ENCODE measurements at regions of chr16 and their contacts with region 1.

Region 1: GRCh38 chr16:78333808-78334207 is 234.4 kb downstream of the WWOX start:
- DNase-seq: no peak
- H3K4me3 ChIP-seq: peak overlapping the region; percentile 5
- H3K27ac ChIP-seq: no peak overlapping the region
- H3K4me1 ChIP-seq: no peaks in the 10 kb centered on the region
- H3K27me3 ChIP-seq: no peaks in the 10 kb centered on the region
- CTCF ChIP-seq: no peak
- EP300 ChIP-seq: no peak
- POLR2A ChIP-seq: no peak

Region 2: DNA sequence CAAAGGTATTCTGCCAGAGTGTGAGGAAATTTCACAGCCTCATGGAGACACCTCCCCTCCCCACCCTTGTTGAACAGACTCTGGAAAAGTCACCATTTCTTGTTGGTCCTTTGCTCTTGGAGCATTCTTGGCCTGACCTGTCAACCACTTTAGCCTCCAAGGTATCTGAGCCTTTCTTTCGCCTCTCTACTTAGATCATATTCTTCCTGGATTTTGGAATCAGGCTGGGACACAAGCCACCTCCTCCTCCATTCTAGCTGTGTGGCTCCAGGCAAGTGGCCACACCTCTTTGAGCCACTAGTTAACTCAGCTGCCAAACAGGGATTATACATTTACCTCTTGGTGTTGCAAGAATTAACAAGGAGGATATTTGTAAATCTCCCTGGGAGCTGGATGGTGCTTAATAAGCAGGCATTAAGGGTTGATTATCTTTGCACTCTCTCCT is 40.9 kb before region 1 on chr16:
- intact Hi-C with region 1: no loop called
- DNase-seq: no peak
- H3K4me3 ChIP-seq: no peak overlapping the region
- H3K27ac ChIP-seq: no peak overlapping the region
- H3K4me1 ChIP-seq: peaks cover 3% of the 10 kb centered on the region
- H3K27me3 ChIP-seq: no peaks in the 10 kb centered on the region
- CTCF ChIP-seq: no peak
- EP300 ChIP-seq: no peak
- POLR2A ChIP-seq: no peak

Region 3: DNA sequence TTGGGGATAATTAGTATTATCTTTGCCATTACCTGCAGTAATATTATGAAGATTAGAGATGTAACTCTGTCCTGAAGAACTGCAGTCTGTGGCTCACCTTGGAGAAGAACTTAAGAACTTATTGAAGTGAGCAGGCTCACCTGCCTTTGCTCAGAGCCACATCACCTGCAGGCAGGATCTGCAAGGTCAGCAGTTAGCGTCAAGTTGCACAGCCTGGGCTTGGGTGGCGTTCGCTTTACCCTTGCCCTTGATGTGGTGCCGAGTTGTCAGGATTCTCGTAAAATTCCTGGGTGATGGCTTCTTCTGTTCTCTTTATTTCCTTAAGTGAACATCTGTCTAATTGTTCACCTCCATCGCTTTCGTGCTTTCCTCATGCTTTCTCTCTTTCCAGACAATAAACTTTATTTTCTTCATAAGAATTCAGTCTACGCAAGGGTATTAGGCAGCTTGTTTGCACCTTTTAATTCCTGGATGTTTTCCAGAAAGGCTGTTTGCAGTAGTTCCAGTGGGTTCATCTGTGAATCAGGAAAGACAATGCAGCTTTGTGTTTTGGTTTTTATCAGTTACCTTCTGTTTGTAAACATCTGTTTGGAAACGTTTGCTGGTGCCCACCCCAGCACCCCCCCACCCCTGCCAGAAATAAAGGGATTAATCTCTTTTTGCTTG is 19.9 kb after region 1 on chr16:
- intact Hi-C with region 1: loop called in 1 of 4 experiments (anchors 1 kb)
- DNase-seq: no peak
- H3K4me3 ChIP-seq: no peak overlapping the region
- H3K27ac ChIP-seq: no peak overlapping the region
- H3K4me1 ChIP-seq: no peaks in the 10 kb centered on the region
- H3K27me3 ChIP-seq: no peaks in the 10 kb centered on the region
- CTCF ChIP-seq: no peak
- EP300 ChIP-seq: no peak
- POLR2A ChIP-seq: no peak